Breast epithelium (tissue), 4 donors: ENCODE measurements at regions of chr1 and their contacts with region 1.

Region 1: DNA sequence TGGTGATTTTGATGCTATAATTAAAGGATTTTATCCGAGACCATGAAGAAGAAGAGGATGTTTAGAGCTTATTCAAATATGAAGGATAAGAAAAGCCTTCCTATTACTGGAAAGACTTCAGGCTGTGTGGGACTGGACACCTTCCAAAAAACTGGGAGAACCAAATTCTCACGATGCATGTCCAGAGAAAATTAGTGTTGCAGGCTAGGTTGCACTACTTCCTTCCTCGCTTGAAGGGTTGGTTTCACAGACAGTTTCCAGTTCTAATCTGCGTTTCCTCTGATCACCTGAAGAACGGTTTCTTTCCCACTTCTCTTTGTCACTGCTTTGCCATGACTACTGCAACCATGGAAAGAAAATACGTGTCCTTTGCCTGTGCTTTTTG is 2.0 kb downstream of the MTARC2 start:
- DNase-seq: no peak
- H3K4me3 ChIP-seq: peak overlapping the region in 1 of 3 donors; percentile 97
- H3K27ac ChIP-seq: no peak overlapping the region
- H3K4me1 ChIP-seq: no peaks in the 10 kb centered on the region
- H3K27me3 ChIP-seq: no peaks in the 10 kb centered on the region
- CTCF ChIP-seq: no peak
- POLR2A ChIP-seq: no peak

Region 2: DNA sequence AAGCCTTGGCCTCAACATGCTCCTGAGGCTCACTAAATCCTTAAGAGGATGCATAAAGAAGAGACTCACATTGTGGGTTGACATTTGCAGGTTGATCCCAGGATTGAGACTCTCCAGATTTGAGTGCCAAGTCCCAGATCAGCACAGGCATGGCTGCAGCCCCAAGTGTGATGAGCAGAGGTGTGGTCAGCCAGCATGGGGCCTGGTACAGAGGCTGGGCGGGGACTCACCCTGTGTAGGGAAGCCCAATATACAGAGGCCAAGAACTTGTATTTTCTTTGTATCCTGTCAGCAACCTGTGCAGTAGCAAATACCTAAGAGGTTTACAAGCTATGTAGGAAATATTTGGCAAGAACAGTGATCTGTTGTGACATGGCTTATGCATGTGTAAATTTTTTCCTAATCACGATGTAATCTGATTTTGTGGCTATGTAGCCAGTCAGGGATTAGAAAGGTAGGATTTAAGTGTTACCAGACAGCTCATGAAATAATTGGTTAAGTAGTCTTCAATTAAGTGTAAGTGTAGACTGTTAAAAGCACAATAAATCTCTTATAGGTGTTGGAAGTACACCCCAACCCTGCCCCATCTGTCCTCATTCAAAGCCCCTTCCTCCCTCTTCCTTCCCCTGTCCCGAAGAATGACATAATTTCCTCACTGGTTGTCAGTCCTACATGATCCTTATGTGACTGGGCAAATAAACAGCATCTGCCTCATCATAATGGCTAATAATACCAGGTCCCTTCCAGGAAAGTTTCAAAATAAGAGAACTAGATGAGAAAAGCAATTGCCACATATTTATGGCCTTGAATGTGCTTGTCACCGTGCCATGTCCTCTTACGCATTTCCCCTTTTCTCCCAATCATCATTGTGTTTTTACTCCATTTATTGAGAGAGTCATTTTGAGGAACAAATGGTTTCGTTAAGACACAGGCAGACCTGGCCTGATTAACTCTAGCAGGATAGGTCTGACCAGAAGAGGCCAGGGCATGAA is 250.0 kb after region 1 on chr1:
- intact Hi-C with region 1: no loop called
- DNase-seq: no peak
- H3K4me3 ChIP-seq: no peak overlapping the region
- H3K27ac ChIP-seq: peak overlapping the region in 1 of 2 donors; percentile 61
- H3K4me1 ChIP-seq: no peaks in the 10 kb centered on the region
- H3K27me3 ChIP-seq: no peaks in the 10 kb centered on the region
- CTCF ChIP-seq: no peak
- POLR2A ChIP-seq: no peak

Region 3: GRCh38 chr1:222732216-222733159 is 1982.4 kb after region 1 on chr1:
- intact Hi-C with region 1: loop called (anchors 10 kb)
- DNase-seq: no peak
- H3K4me3 ChIP-seq: no peak overlapping the region
- H3K27ac ChIP-seq: no peak overlapping the region
- H3K4me1 ChIP-seq: no peaks in the 10 kb centered on the region
- H3K27me3 ChIP-seq: no peaks in the 10 kb centered on the region
- CTCF ChIP-seq: no peak
- POLR2A ChIP-seq: no peak